ENCODE measurements at regions of chr16 and their contacts with region 1.

Region 1: GRCh38 chr16:74309789-74310781 is 13.5 kb downstream of the PSMD7 start:
- DNase-seq: peak in 1 of 2 donors; percentile 29
- H3K4me3 ChIP-seq: no peak overlapping the region
- H3K27ac ChIP-seq: no peak overlapping the region
- H3K4me1 ChIP-seq: no peaks in the 10 kb centered on the region
- H3K27me3 ChIP-seq: no peaks in the 10 kb centered on the region
- CTCF ChIP-seq: peak; percentile 24 to 80 (median 62)
- POLR2A ChIP-seq: no peak

Region 2: GRCh38 chr16:74291577-74292208 is 18.4 kb before region 1 on chr16:
- intact Hi-C with region 1: no loop called
- DNase-seq: no peak
- H3K4me3 ChIP-seq: no peak overlapping the region
- H3K27ac ChIP-seq: no peak overlapping the region
- H3K4me1 ChIP-seq: peaks cover 6% of the 10 kb centered on the region in 2 donors
- H3K27me3 ChIP-seq: no peaks in the 10 kb centered on the region
- CTCF ChIP-seq: no peak
- POLR2A ChIP-seq: no peak

Region 3: DNA sequence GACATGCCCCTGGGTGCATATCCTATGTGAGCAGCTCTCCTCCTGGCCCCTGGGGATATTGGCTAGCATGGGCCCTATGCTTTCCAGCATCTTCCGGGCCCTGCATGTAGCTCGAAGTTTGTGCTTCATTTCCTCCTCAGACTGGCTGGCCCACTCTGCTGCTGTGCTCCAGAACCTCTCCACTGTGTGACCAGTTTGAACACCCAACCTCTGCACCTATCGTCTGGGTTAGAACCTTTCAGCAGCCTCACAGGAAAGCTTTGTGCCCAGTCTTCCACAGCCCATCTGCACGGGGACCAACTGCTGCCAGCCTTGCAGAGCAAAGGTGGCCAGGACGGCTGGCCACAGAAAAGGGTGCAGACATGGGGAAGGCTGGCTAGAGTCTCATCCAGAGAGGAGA is 121.4 kb after region 1 on chr16:
- intact Hi-C with region 1: loop called (anchors 5 kb)
- DNase-seq: no peak
- H3K4me3 ChIP-seq: no peak overlapping the region
- H3K27ac ChIP-seq: no peak overlapping the region
- H3K4me1 ChIP-seq: no peaks in the 10 kb centered on the region
- H3K27me3 ChIP-seq: no peaks in the 10 kb centered on the region
- CTCF ChIP-seq: no peak
- POLR2A ChIP-seq: no peak

Measured in thyroid gland (tissue), 4 donors.